ENCODE measurements at regions of chr5 and their contacts with region 1.

Region 1: DNA sequence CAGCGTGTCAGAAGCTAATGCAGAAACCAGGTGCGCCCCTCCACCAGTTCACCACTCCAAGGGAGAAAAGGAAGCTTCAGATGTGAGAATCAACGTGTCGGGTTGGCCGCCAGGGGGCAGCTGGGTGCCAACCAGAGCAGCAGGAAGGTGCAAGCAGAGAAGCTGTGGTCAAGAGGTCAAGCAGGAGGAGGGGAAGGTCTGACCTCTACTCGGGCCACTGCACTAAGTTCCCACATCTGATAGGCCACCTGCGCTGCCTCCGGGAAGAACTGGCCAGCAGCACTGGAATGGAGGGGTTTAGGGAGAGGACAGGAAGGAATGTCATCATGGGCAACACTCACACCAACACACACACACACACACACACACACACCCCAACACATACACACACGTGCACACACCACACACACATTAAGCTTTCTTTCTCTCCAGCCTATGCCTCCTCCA is 31.4 kb downstream of the ANXA6 start:
- DNase-seq: peak; percentile 80
- ATAC-seq: no peak
- H3K4me3 ChIP-seq: peak overlapping the region in 1 of 5 experiments; percentile 12
- H3K4me3 Mint-ChIP-seq: peak overlapping the region; percentile 88
- H3K27ac ChIP-seq: peak overlapping the region; percentile 87 to 91
- H3K27ac Mint-ChIP-seq: peak overlapping the region; percentile 91
- H3K4me1 ChIP-seq: peaks cover 50 to 74% of the 10 kb centered on the region in 2 donors
- H3K4me1 Mint-ChIP-seq: peaks cover 78% of the 10 kb centered on the region
- H3K27me3 ChIP-seq: no peaks in the 10 kb centered on the region
- H3K27me3 Mint-ChIP-seq: no peaks in the 10 kb centered on the region
- CTCF ChIP-seq: peak; percentile 78

Region 2: GRCh38 chr5:151063142-151063949 is 62.9 kb before region 1 on chr5:
- CTCF ChIA-PET with region 1: interaction called, 918 read pairs
- POLR2A ChIA-PET with region 1: no interaction called
- intact Hi-C with region 1: loop called (anchors 1 kb)
- DNase-seq: no peak
- ATAC-seq: no peak
- H3K4me3 ChIP-seq: no peak overlapping the region
- H3K4me3 Mint-ChIP-seq: no peak overlapping the region
- H3K27ac ChIP-seq: no peak overlapping the region
- H3K27ac Mint-ChIP-seq: peak overlapping the region; percentile 72
- H3K4me1 ChIP-seq: peaks cover 44 to 54% of the 10 kb centered on the region in 2 donors
- H3K4me1 Mint-ChIP-seq: peaks cover 69% of the 10 kb centered on the region
- H3K27me3 ChIP-seq: no peaks in the 10 kb centered on the region
- H3K27me3 Mint-ChIP-seq: no peaks in the 10 kb centered on the region
- CTCF ChIP-seq: no peak

Region 3: DNA sequence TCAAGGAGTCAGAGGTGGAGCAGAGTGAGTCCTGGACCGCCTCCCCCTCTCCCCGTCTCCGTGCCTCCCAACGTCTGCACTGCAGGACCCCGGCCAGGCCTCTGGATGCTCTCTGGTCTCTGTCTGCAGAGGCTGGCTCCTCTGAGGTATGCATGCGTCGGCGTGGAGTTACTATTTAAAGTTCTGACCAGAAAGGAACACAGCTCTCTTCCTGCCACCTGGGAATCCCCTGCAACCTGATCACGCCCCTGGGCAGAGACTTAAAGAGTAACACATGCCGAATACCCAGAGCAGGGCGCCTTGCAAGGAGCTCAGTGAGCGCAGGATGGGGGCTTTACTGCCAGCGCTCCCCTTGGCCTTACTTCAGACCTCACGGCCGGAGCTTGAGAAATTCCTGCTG is 15.3 kb after region 1 on chr5:
- CTCF ChIA-PET with region 1: interaction called, 1,701 read pairs
- POLR2A ChIA-PET with region 1: interaction called, 11 read pairs
- intact Hi-C with region 1: loop called (anchors 2 kb)
- DNase-seq: peak; percentile 75
- ATAC-seq: peak; percentile 95
- H3K4me3 ChIP-seq: peak overlapping the region in 4 of 5 experiments; percentile 36 to 70 (median 52)
- H3K4me3 Mint-ChIP-seq: peak overlapping the region; percentile 83
- H3K27ac ChIP-seq: peak overlapping the region; percentile 79 to 91
- H3K27ac Mint-ChIP-seq: peak overlapping the region; percentile 91
- H3K4me1 ChIP-seq: peaks cover 63 to 87% of the 10 kb centered on the region in 2 donors
- H3K4me1 Mint-ChIP-seq: peaks cover 82% of the 10 kb centered on the region
- H3K27me3 ChIP-seq: no peaks in the 10 kb centered on the region
- H3K27me3 Mint-ChIP-seq: no peaks in the 10 kb centered on the region
- CTCF ChIP-seq: no peak

Region 4: DNA sequence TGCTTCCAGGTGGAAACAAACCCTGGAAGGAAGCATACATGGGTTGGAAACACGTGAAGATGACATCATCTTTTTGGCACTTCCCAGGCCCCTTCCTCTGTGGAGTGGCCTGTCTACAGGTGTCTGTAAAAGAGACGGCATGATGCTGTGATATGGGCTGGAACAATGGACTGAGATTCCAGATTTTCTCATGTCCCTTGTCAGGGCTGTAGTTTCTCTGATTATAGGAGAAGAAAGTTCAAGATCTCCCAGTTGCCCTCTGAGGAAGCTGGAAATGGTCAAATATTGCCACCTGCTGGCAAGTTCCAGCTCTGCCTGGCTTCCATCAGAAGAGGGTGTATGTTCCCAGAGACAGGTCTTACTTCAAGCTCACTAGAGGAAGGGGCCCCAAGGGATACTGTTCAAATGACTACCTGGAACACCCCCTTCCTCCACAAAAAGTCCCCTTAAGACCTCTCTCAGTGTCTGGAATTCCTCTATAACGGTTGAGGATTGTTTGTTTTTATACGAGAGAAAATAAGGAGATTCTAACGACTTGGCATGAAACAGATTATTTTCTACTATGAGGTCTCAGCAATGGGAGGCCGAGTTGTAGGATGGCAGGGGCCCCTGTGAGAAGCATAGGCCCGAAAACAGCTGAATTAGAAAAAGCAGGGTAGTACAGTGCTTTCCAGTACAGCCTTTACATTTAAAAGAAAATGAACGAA is 38.6 kb after region 1 on chr5:
- CTCF ChIA-PET with region 1: interaction called, 1,701 read pairs
- POLR2A ChIA-PET with region 1: interaction called, 16 read pairs
- intact Hi-C with region 1: loop called (anchors 1 kb)
- DNase-seq: peak; percentile 89
- ATAC-seq: peak; percentile 97
- H3K4me3 ChIP-seq: no peak overlapping the region
- H3K4me3 Mint-ChIP-seq: no peak overlapping the region
- H3K27ac ChIP-seq: no peak overlapping the region
- H3K27ac Mint-ChIP-seq: peak overlapping the region; percentile 72
- H3K4me1 ChIP-seq: peaks cover 21 to 28% of the 10 kb centered on the region in 2 donors
- H3K4me1 Mint-ChIP-seq: peaks cover 36% of the 10 kb centered on the region
- H3K27me3 ChIP-seq: no peaks in the 10 kb centered on the region
- H3K27me3 Mint-ChIP-seq: no peaks in the 10 kb centered on the region
- CTCF ChIP-seq: peak; percentile 95

Region 5: GRCh38 chr5:151196556-151197290 is 70.5 kb after region 1 on chr5:
- CTCF ChIA-PET with region 1: interaction called, 16 read pairs
- POLR2A ChIA-PET with region 1: interaction called, 4 read pairs
- intact Hi-C with region 1: loop called (anchors 1 kb)
- DNase-seq: peak; percentile 82
- ATAC-seq: peak; percentile 95
- H3K4me3 ChIP-seq: no peak overlapping the region
- H3K4me3 Mint-ChIP-seq: peak overlapping the region; percentile 67
- H3K27ac ChIP-seq: peak overlapping the region; percentile 61 to 67
- H3K27ac Mint-ChIP-seq: peak overlapping the region; percentile 97
- H3K4me1 ChIP-seq: peaks cover 41 to 55% of the 10 kb centered on the region in 2 donors
- H3K4me1 Mint-ChIP-seq: peaks cover 63% of the 10 kb centered on the region
- H3K27me3 ChIP-seq: no peaks in the 10 kb centered on the region
- H3K27me3 Mint-ChIP-seq: no peaks in the 10 kb centered on the region
- CTCF ChIP-seq: no peak

Region 6: DNA sequence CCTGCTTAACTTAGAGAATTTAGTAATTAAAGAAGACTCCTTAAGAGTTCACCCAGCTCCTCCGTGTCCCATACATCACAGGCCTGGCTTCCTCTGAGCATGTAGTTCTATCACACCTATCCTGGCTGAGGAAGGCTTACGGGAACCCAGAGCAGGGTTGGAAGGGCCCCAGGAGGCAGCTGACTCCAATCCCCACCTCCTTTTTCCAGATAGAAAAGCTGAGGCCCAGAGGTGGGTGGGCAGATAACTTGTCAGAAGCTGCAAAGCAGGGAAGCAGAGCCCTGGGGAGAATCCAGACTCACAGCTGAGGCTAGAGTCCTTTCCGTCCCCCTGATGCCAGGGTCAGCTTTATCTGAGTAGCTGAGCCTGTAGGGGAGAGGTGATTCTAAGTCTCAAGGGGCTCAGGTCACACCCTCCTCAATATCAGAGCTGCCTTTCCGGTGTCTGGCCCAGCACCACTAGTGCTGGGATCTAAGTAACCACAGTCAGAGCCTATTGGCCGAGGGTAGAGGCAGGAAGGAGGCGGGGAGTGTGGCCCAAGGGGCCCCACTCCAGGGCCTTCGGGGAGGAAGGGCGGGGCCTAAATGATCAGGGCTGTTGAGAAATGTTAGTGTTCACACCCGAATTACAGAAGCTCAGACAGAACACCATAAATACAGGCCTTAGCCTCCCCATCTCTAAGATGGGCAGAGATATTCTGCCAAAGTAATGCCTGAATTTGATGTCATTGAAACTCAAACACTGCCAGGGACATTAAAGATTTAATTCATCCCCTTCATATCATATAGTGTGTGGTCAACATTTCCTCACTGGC is 87.8 kb after region 1 on chr5:
- CTCF ChIA-PET with region 1: interaction called, 34 read pairs
- POLR2A ChIA-PET with region 1: interaction called, 10 read pairs
- intact Hi-C with region 1: loop called (anchors 1 kb)
- DNase-seq: peak; percentile 92
- ATAC-seq: peak; percentile 74
- H3K4me3 ChIP-seq: peak overlapping the region; percentile 35 to 58 (median 38)
- H3K4me3 Mint-ChIP-seq: peak overlapping the region; percentile 79
- H3K27ac ChIP-seq: peak overlapping the region; percentile 96 to 99
- H3K27ac Mint-ChIP-seq: peak overlapping the region; percentile 99
- H3K4me1 ChIP-seq: peaks cover 98 to 100% of the 10 kb centered on the region in 2 donors
- H3K4me1 Mint-ChIP-seq: peaks cover 90% of the 10 kb centered on the region
- H3K27me3 ChIP-seq: no peaks in the 10 kb centered on the region
- H3K27me3 Mint-ChIP-seq: no peaks in the 10 kb centered on the region
- CTCF ChIP-seq: no peak

Region 7: GRCh38 chr5:151298063-151298855 is 172.0 kb after region 1 on chr5:
- CTCF ChIA-PET with region 1: interaction called, 10 read pairs
- POLR2A ChIA-PET with region 1: no interaction called
- intact Hi-C with region 1: no loop called
- DNase-seq: peak; percentile 56
- ATAC-seq: peak; percentile 51
- H3K4me3 ChIP-seq: no peak overlapping the region
- H3K4me3 Mint-ChIP-seq: no peak overlapping the region
- H3K27ac ChIP-seq: no peak overlapping the region
- H3K27ac Mint-ChIP-seq: no peak overlapping the region
- H3K4me1 ChIP-seq: no peaks in the 10 kb centered on the region
- H3K4me1 Mint-ChIP-seq: peaks cover 2% of the 10 kb centered on the region
- H3K27me3 ChIP-seq: no peaks in the 10 kb centered on the region
- H3K27me3 Mint-ChIP-seq: peaks cover 32% of the 10 kb centered on the region
- CTCF ChIP-seq: peak; percentile 47

Region 8: DNA sequence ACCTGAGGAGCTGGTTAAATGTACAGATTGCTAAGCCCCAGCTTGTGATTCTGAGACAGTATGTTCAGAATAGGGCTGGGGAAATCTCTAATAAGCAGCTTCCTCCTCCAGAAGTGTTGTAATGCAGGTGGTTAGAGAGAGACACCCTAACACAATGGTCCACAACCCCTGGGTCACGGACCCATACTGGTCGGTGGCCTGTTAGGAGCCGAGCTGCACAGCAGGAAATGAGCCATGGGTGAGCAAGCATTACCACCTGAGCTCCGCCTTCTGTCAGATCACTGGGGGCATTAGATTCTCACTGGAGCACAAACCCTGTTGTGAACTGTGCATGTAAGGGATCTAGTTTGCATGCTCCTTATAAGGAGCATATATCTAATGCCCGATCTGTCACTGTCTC is 383.0 kb after region 1 on chr5:
- CTCF ChIA-PET with region 1: no interaction called
- POLR2A ChIA-PET with region 1: no interaction called
- intact Hi-C with region 1: no loop called
- DNase-seq: peak; percentile 43
- ATAC-seq: peak; percentile 64
- H3K4me3 ChIP-seq: no peak overlapping the region
- H3K4me3 Mint-ChIP-seq: peak overlapping the region; percentile 35
- H3K27ac ChIP-seq: peak overlapping the region in 1 of 2 donors; percentile 51
- H3K27ac Mint-ChIP-seq: peak overlapping the region; percentile 58
- H3K4me1 ChIP-seq: peaks cover 10 to 14% of the 10 kb centered on the region in 2 donors
- H3K4me1 Mint-ChIP-seq: peaks cover 12% of the 10 kb centered on the region
- H3K27me3 ChIP-seq: no peaks in the 10 kb centered on the region
- H3K27me3 Mint-ChIP-seq: no peaks in the 10 kb centered on the region
- CTCF ChIP-seq: no peak